ENCODE measurements at regions of chr1 and their contacts with region 1.

Region 1: DNA sequence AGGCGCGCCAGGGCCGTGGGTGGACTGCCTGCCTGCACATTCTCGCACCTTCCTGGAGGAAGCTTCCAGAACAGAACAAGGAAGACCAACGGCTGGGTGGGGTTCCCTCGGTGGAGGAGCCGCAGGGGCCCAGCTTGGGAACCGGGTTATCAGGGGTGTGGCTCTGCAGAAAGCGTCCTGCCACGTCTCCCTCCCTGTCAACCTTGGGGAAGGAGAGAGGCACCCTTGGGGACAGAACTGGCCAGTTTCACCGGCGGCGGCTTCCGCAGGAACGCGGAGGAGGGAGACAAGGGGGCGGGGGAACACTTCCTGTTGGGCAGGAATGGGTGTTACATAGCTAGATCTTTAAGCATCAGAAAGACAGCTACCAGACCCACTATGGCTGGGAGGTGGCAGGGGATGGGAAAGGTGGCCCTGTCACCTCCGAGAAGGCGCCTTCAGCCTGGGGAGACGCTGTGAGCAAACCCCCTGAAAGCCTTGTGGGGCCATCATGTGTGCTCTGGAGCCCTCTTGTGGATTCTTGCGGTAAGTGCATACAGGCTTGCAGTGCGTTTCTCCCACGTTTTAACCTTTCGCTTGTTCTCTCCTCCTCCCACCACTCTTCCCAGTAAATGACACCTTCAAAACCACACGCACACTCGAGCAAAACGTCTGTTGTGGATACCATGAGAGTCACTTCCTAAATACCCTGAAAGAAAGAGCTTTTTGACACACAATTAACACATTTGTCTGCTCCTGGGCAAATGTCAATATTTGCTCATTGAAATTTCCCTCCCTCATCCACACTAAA is 3.8 kb upstream of the PLEKHA6 start:
- DNase-seq: peak; percentile 47 to 81 (median 74)
- ATAC-seq: peak; percentile 94
- H3K4me3 ChIP-seq: peak overlapping the region; percentile 69
- H3K4me3 Mint-ChIP-seq: peak overlapping the region; percentile 37 to 84 (median 70)
- H3K27ac ChIP-seq: peak overlapping the region; percentile 58
- H3K27ac Mint-ChIP-seq: peak overlapping the region; percentile 37 to 84 (median 69)
- H3K4me1 ChIP-seq: peaks cover 11 to 12% of the 10 kb centered on the region in 2 donors
- H3K4me1 Mint-ChIP-seq: peaks cover 7 to 18% (median 13%) of the 10 kb centered on the region in 7 donors
- H3K27me3 ChIP-seq: no peaks in the 10 kb centered on the region
- H3K27me3 Mint-ChIP-seq: peaks cover 0 to 8% (median 0%) of the 10 kb centered on the region in 5 donors

Region 2: GRCh38 chr1:203504397-203505250 is 858.9 kb before region 1 on chr1:
- CTCF ChIA-PET with region 1: no interaction called
- POLR2A ChIA-PET with region 1: no interaction called
- intact Hi-C with region 1: loop called in 1 of 2 experiments (anchors 1 kb)
- DNase-seq: peak; percentile 44 to 76 (median 64)
- ATAC-seq: peak; percentile 69
- H3K4me3 ChIP-seq: no peak overlapping the region
- H3K4me3 Mint-ChIP-seq: no peak overlapping the region
- H3K27ac ChIP-seq: no peak overlapping the region
- H3K27ac Mint-ChIP-seq: peak overlapping the region in 2 of 9 donors; percentile 7 to 38
- H3K4me1 ChIP-seq: no peaks in the 10 kb centered on the region
- H3K4me1 Mint-ChIP-seq: peaks cover 0 to 12% (median 8%) of the 10 kb centered on the region in 7 donors
- H3K27me3 ChIP-seq: no peaks in the 10 kb centered on the region
- H3K27me3 Mint-ChIP-seq: peaks cover 0 to 20% (median 0%) of the 10 kb centered on the region in 5 donors

Region 3: DNA sequence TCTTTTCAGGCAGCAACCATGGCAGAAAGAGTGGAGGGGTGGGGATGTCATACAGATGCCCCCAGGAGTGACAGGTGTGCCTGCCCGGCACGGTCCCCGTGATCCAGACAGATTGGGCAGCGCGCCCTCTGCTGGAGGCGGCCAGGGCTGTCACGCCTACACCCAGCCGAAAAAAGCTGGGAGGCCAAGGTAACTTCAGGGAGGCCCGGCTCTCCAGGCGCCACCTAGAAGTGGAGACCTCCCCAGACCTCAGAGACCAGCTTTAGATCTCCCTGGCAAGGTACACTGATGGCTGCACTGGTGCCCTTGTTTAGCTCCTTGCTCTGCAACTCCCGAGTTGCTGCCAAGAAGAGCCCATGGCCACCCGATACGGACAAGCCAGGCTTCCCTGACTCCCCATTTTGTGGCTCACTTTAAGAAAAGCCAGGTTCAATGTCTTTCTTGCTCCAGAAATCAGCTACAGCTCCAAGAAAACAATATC is 156.4 kb before region 1 on chr1:
- CTCF ChIA-PET with region 1: interaction called, 4 read pairs
- POLR2A ChIA-PET with region 1: no interaction called
- intact Hi-C with region 1: loop called (anchors 1 to 2 kb)
- DNase-seq: peak; percentile 38 to 81 (median 64)
- ATAC-seq: peak; percentile 93
- H3K4me3 ChIP-seq: no peak overlapping the region
- H3K4me3 Mint-ChIP-seq: peak overlapping the region in 1 of 10 donors; percentile 45
- H3K27ac ChIP-seq: no peak overlapping the region
- H3K27ac Mint-ChIP-seq: no peak overlapping the region
- H3K4me1 ChIP-seq: peaks cover 0 to 4% of the 10 kb centered on the region in 2 donors
- H3K4me1 Mint-ChIP-seq: peaks cover 3 to 19% (median 15%) of the 10 kb centered on the region in 7 donors
- H3K27me3 ChIP-seq: no peaks in the 10 kb centered on the region
- H3K27me3 Mint-ChIP-seq: peaks cover 25 to 40% (median 33%) of the 10 kb centered on the region in 5 donors

Region 4: DNA sequence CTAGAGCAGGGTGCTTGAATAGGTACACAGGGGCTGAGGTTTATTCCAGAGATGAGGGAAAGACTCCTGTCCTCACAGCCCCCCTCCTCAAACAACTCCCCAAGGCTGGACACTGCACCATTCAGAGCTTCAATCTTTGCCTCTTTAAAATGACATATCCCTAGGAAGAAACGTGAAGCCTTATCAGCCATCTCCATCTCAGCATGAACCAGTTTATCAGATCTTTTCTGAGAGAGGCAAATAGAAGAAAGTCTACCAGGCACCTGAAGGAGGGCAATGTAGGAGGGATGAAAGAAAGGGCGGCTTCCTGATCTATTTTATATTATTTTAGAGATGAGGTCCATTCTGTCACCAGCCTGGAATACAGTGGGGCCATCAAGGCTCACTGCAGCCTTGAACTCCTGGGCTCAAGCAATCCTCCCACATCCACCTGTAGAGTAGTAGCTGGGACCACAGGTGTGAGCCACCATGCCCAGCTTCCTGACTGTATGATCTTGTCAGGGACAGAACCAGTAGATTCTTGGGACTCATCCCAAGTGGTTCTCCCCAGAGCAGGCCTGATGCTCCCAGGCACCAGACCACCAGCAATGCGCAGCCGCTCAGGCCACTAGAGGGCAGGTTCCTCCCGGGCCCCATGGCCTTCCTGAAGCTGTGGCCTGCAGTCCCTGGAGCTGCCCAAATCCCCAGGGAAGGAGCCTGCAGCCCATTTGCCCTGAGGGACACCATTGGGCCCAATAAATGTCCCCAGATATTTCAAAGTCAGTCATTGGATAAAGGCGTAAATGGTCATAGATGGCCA is 105.4 kb before region 1 on chr1:
- CTCF ChIA-PET with region 1: interaction called, 15 read pairs
- POLR2A ChIA-PET with region 1: no interaction called
- intact Hi-C with region 1: loop called (anchors 1 kb)
- DNase-seq: peak in 4 of 9 donors; percentile 3 to 47 (median 13)
- ATAC-seq: no peak
- H3K4me3 ChIP-seq: no peak overlapping the region
- H3K4me3 Mint-ChIP-seq: no peak overlapping the region
- H3K27ac ChIP-seq: no peak overlapping the region
- H3K27ac Mint-ChIP-seq: no peak overlapping the region
- H3K4me1 ChIP-seq: no peaks in the 10 kb centered on the region
- H3K4me1 Mint-ChIP-seq: peaks cover 0 to 4% (median 0%) of the 10 kb centered on the region in 7 donors
- H3K27me3 ChIP-seq: no peaks in the 10 kb centered on the region
- H3K27me3 Mint-ChIP-seq: peaks cover 0 to 6% (median 0%) of the 10 kb centered on the region in 5 donors

Region 5: DNA sequence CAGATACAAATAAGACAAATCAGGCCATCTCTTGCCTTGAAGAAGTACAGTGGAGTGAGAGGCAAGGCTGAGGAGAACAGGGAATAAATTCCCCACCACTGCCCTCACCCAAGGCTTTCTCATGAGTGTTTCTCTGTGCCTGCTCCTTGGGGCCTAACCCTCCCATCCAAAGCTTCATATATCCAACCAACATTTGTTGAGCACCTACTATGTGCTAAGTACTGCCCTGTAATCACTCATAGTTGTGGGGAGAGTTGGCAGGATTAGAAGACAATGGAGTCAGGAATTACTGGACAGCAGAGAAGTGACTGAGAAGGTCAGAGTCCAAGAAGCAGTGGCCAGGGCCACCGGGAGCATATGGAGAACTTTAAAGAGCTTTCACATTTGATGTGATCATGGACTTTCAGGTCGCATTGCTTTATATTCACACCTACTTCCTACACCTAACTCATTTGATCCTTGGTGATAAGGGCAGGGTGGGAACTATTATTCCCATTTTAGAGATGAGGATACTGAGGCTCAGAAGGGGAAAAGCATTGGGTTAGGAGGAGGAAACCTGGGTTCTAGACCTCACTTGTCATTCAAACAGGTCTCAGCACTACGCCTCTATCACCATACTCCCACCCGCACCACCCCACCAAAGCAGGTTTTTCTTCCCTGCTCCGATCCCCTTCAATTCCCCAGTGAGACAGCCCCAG is 10.2 kb before region 1 on chr1:
- CTCF ChIA-PET with region 1: interaction called, 10 read pairs
- POLR2A ChIA-PET with region 1: interaction called, 3 read pairs
- intact Hi-C with region 1: no loop called
- DNase-seq: no peak
- ATAC-seq: no peak
- H3K4me3 ChIP-seq: no peak overlapping the region
- H3K4me3 Mint-ChIP-seq: no peak overlapping the region
- H3K27ac ChIP-seq: no peak overlapping the region
- H3K27ac Mint-ChIP-seq: no peak overlapping the region
- H3K4me1 ChIP-seq: no peaks in the 10 kb centered on the region
- H3K4me1 Mint-ChIP-seq: peaks cover 0 to 6% (median 5%) of the 10 kb centered on the region in 7 donors
- H3K27me3 ChIP-seq: no peaks in the 10 kb centered on the region
- H3K27me3 Mint-ChIP-seq: peaks cover 0 to 6% (median 0%) of the 10 kb centered on the region in 5 donors

Region 6: GRCh38 chr1:204398217-204399081 is 34.9 kb after region 1 on chr1:
- CTCF ChIA-PET with region 1: interaction called, 10 read pairs
- POLR2A ChIA-PET with region 1: no interaction called
- intact Hi-C with region 1: loop called in 1 of 2 experiments (anchors 1 kb)
- DNase-seq: peak in 8 of 9 donors; percentile 44 to 74 (median 66)
- ATAC-seq: peak; percentile 92
- H3K4me3 ChIP-seq: no peak overlapping the region
- H3K4me3 Mint-ChIP-seq: no peak overlapping the region
- H3K27ac ChIP-seq: peak overlapping the region; percentile 54
- H3K27ac Mint-ChIP-seq: peak overlapping the region; percentile 55 to 91 (median 80)
- H3K4me1 ChIP-seq: no peaks in the 10 kb centered on the region
- H3K4me1 Mint-ChIP-seq: peaks cover 4 to 21% (median 8%) of the 10 kb centered on the region in 7 donors
- H3K27me3 ChIP-seq: no peaks in the 10 kb centered on the region
- H3K27me3 Mint-ChIP-seq: no peaks in the 10 kb centered on the region

Region 7: DNA sequence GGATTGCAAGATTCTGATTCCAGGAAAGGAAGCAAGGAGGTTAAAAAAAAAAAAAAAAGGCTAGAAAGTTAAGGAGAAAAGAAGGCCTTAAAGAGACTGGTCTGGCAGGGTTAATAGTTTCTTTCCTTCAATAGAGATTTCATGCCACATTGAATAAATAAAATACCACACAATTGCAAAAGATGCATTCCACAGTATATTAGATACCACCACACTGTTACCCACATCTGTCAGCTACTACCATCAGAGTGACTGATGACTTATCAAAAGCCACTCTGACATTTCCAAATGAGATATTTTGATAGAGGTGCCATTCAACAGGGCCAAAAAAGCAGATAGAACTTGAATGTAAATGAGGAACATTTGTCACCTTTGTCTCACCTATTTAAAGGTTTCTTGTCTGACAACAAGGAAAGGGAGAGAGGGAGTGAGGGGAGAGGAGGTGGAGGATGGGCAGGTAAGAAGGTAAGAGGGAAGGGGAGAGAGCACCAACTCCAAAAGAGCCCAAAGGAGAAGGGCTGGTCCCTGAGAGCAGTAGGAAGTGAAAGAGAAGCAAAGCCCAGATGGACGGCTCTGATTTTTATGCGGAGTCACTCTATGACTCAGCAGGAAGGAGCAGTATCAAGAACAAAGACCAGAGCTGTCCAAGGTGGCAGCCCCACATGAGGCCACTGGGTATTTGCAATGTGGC is 283.7 kb after region 1 on chr1:
- CTCF ChIA-PET with region 1: no interaction called
- POLR2A ChIA-PET with region 1: no interaction called
- intact Hi-C with region 1: no loop called
- DNase-seq: peak in 1 of 9 donors; percentile 2
- ATAC-seq: peak; percentile 57
- H3K4me3 ChIP-seq: no peak overlapping the region
- H3K4me3 Mint-ChIP-seq: no peak overlapping the region
- H3K27ac ChIP-seq: no peak overlapping the region
- H3K27ac Mint-ChIP-seq: no peak overlapping the region
- H3K4me1 ChIP-seq: no peaks in the 10 kb centered on the region
- H3K4me1 Mint-ChIP-seq: peaks cover 0 to 5% (median 0%) of the 10 kb centered on the region in 7 donors
- H3K27me3 ChIP-seq: no peaks in the 10 kb centered on the region
- H3K27me3 Mint-ChIP-seq: peaks cover 0 to 42% (median 16%) of the 10 kb centered on the region in 5 donors

Measured in naive thymus-derived CD4-positive, alpha-beta T cell (primary cell).